ENCODE measurements at regions of chr6 and their contacts with region 1.

Region 1: DNA sequence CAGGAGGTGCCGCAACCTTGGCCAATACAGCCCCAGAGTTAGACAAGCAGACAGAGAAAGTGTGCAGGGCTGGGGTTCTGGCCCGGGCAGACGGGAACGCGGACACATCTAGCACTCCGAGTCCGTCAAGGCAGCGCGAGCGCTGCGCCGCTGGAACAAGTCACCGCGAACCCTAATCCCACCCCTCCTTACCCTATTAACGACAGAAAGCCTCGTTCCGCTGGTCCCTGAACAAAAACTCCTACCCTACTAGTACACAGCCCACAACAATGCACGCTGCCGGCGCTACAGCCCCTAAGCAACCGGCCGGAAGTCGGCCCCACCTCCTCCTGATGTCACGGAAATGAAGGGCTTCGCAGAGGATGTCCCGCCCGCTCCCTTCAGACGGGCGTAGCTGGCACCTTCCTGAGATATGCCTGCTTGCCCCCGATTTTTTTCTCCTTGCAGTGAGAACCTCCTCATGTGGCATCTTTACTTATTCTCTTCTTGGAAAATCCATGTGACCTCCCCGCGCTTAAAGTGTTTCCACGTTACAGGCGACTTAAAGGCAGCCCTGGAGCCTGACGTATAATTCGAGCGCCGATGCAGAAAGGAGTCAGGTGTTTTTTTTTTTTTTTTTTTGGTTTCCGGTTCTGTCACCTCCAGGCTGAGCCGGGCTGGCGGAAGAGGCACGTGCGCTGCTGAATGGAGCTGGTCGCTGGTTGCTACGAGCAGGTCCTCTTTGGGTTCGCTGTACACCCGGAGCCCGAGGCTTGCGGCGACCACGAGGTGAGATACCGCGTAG is at the starts of genes C6orf52 and PAK1IP1:
- DNase-seq: peak; percentile 91

Region 2: GRCh38 chr6:10510592-10511367 is 183.7 kb before region 1 on chr6:
- CTCF ChIA-PET with region 1: interaction called, 4 read pairs
- POLR2A ChIA-PET with region 1: interaction called, 11 read pairs
- DNase-seq: peak; percentile 70

Region 3: DNA sequence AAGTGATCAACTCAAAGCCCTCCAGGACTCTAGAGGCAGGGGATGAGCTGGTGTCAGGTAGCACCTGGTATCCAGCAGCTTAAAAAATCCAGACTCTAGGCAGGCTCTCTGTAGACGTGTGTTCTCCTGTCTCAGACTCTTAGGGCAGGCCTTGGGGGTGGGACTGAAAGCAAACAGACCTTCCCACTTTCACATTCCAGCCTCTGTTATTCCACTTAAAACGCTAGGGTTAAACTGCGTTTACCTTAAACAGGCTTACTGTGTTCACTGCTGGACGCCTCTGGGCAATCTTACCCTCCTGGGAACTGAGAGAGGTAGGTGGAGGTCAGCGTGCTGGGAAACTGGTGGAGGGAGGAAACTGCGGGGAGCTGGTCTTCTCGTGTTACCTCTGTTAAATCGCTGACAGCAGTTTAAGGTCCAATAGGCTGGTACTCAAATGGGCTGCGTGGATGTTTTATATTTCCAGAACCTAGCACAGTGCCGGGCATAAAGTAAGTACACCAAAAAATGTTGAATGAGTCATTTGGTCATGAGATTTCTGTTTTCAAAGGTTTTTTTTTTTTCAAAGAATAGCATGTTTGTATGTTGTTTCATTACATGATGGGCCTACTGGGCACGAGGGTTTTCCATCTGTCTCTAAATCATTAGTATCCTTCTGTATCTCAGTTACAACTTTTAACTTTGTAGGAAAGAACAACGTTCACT is 173.2 kb before region 1 on chr6 and contains the start of gene GCNT2:
- CTCF ChIA-PET with region 1: no interaction called
- POLR2A ChIA-PET with region 1: interaction called, 11 read pairs
- DNase-seq: peak; percentile 65

Region 4: GRCh38 chr6:10722820-10723566 is 28.5 kb after region 1 on chr6 and contains the start of gene TMEM14C:
- CTCF ChIA-PET with region 1: no interaction called
- POLR2A ChIA-PET with region 1: interaction called, 27 read pairs
- DNase-seq: peak; percentile 93

Region 5: DNA sequence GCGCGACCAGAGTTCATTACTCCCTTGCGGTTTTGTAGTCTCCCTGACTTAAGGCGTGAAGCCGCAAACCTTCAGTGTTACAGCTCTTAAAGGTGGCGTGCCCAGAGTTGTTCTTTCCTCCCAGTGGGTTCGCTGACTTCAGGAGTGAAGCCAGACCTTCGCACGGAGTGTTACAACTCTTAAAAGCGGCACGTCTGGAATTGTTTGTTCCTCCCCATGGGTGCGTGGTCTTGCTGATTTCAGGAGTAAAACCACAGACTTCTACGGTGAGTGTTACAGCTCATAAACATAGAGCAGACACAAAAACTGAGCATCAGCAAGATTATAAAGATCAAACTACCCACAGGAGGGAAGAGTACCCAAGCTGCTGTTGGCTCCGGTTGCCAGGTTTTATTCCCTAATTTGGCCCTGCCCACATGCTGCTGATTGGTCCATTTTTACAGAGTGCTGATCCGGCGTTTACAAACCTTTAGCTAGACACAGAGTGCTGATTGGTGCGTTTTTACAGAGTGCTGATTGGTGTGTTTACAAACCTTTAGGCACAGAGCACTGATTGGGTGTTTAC is 38.7 kb after region 1 on chr6:
- CTCF ChIA-PET with region 1: no interaction called
- POLR2A ChIA-PET with region 1: no interaction called
- DNase-seq: no peak